Natural killer cell (primary cell): ENCODE measurements at regions of chr5 and their contacts with region 1.

Region 1: DNA sequence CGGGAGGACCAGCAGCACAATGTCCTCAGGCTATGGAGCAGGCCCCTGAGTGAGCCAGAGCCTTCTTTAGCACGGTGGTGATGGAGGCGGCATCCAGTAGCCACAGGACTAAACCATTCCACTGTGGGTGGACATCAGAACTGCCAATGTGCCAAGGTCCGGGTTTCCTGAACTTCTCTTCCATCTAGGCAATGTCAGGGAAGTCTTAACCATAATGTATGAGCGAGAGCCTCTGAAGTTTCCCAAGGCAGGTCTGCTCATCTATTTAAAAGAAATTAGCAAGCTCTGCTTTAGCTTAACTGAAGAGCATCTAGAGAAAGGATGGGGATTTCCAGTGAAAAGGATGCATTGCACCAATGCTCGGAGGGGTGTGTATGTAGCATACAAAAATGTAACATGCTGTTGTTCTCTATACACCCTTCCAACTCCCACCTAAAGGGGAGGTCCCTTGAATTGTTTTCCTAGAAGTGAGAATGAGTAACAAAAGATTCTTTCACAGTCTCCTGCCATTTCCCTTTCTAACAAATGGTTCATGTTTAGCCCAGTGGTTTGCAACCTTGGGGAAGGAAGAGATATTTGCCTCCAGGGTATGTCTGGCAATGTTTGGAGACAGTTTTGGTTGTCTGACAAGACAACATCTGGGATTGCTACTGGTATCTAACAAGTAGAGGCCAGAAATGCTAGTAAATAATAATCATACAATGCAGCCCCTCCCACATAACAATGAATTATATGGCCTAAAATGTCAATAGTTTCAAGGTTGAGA is 6.1 kb upstream of the RXFP3 start:
- DNase-seq: no peak
- ATAC-seq: no peak
- H3K4me3 ChIP-seq: no peak overlapping the region
- H3K4me3 Mint-ChIP-seq: no peak overlapping the region
- H3K27ac ChIP-seq: no peak overlapping the region
- H3K27ac Mint-ChIP-seq: no peak overlapping the region
- H3K4me1 ChIP-seq: no peaks in the 10 kb centered on the region
- H3K4me1 Mint-ChIP-seq: no peaks in the 10 kb centered on the region
- H3K27me3 ChIP-seq: no peaks in the 10 kb centered on the region
- H3K27me3 Mint-ChIP-seq: peaks cover 20 to 31% of the 10 kb centered on the region in 2 donors
- CTCF ChIP-seq: no peak

Region 2: GRCh38 chr5:31993165-31993961 is 1936.7 kb before region 1 on chr5:
- intact Hi-C with region 1: loop called (anchors 10 kb)
- DNase-seq: no peak
- ATAC-seq: no peak
- H3K4me3 ChIP-seq: no peak overlapping the region
- H3K4me3 Mint-ChIP-seq: no peak overlapping the region
- H3K27ac ChIP-seq: no peak overlapping the region
- H3K27ac Mint-ChIP-seq: no peak overlapping the region
- H3K4me1 ChIP-seq: no peaks in the 10 kb centered on the region
- H3K4me1 Mint-ChIP-seq: peaks cover 0 to 5% of the 10 kb centered on the region in 2 donors
- H3K27me3 ChIP-seq: no peaks in the 10 kb centered on the region
- H3K27me3 Mint-ChIP-seq: peaks cover 0 to 12% of the 10 kb centered on the region in 2 donors
- CTCF ChIP-seq: no peak